Left cardiac atrium (tissue), 4 donors: ENCODE measurements at regions of chr12 and their contacts with region 1.

Region 1: DNA sequence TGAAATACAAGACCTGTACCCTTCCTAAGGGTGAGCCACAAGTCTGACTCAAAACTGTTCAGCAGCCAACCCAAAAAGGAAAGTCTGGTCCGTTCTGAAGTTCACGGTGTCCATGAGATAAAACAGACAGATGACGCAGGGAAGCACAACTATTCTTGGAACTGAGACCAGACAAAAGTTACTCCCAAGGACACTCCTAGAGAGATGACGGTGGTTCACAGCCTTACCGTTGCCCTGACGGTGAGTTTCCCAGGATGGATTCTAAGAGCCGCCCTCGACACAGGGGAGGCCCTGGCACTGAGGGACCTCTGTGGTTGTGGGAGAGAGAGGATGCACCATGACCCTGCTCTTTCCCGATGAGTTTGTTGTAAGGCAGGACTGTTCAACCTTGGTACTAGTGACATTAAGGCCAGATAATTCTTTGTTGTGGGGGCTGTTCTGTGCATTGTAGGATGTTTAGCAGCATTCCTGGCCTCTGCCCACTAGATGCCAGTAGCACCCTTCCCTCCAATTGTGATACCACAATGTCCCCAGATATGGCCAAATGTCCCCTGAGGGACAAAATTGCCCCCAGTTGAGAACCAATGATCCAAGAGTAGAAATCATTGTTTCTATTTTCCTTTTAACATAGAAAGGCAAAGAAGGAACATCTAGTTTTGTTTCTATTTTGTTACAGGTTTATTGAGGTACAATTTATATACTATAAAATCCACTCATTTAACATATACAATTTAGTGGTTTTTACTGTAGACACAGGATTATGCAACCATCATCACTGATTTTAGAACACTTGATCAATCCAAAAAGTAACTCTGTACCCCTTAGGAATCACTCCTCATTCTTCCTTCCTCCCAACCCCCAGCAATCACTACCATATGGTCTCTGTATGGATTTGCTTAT is 23.0 kb downstream of the OR10P1 start:
- DNase-seq: peak; percentile 63
- ATAC-seq: peak; percentile 84 to 86

Region 2: DNA sequence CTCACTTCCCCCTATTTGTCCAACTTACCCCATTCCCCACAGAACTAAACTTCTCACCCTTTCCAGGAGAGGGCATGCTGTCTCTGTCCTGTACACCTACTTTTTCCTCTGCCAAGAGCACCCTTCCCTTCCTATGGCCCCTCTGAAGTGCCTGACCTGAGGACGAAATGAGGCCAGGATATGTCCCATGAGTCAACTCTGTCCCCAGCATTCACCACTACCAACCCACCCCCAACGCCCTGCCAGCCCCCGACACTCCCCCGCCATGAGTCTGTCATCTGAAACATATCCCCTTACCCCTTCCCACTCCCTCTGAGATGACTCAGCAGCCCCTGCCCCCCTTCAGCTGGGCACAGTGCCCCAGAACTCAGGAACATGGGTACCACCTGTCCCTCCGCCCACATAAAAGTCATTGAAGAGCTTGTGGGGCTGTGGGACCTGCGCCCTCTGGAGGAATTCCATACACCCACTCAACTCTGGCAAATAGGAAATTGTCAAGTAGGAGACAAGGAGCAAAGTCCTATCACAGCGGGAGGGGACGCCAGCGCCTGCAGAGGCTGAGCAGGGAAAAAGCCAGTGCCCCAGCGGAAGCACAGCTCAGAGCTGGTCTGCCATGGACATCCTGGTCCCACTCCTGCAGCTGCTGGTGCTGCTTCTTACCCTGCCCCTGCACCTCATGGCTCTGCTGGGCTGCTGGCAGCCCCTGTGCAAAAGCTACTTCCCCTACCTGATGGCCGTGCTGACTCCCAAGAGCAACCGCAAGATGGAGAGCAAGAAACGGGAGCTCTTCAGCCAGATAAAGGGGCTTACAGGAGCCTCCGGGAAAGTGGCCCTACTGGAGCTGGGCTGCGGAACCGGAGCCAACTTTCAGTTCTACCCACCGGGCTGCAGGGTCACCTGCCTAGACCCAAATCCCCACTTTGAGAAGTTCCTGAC is 21.7 kb after region 1 on chr12:
- intact Hi-C with region 1: loop called in 1 of 2 experiments (anchors 2 kb)
- DNase-seq: peak; percentile 71
- ATAC-seq: peak; percentile 75 to 76

Region 3: GRCh38 chr12:55707841-55708694 is 48.3 kb after region 1 on chr12 and contains the start of gene ITGA7:
- intact Hi-C with region 1: no loop called
- DNase-seq: peak; percentile 82
- ATAC-seq: peak; percentile 51 to 69
- total RNA-seq, gene ITGA7: 395 to 448 TPM

Region 4: DNA sequence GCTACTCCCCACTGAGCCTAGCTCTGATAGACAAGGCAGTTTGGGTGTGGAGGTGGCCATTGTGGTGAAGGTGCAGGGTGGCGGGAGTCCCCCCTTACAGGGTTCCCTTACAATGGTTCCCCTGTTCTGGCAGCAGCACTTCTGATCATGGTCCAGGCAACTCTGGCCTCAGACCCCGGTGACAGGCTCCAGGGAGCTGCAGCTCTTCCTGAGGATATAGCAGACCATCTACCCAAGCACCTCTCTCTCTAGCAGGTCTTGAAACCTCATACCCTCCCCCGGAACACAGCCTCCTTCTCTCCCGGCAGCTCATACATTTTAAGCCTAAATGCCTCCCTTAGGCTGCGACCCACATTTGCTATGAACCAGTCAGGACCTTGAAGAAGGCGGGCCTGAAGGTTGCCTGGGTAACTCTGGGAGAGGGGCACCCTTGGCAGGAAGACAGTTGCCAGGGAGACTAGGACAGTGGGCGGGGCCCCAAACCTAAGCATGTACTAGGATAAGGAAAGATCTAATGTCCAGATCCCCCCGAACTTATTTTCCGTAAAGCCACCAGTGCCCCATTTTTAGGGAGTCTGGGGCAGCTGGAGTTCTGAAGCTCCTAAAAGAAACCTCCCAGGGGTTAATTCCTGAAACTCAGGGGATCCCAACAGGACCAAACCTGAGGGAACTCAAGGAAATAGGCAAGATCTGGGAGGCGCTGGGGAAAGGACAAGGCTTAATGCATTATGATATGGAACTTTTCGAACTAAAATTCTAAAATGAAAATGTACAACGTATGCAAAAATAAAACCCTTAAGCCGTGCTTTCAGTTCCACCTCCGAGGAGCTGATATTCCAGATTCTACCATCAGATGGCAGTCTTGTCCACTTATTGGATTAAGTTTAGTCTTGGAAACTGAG is 78.6 kb after region 1 on chr12:
- intact Hi-C with region 1: no loop called
- DNase-seq: peak; percentile 90
- ATAC-seq: peak; percentile 84